ENCODE measurements at regions of chr4 and their contacts with region 1.

Region 1: DNA sequence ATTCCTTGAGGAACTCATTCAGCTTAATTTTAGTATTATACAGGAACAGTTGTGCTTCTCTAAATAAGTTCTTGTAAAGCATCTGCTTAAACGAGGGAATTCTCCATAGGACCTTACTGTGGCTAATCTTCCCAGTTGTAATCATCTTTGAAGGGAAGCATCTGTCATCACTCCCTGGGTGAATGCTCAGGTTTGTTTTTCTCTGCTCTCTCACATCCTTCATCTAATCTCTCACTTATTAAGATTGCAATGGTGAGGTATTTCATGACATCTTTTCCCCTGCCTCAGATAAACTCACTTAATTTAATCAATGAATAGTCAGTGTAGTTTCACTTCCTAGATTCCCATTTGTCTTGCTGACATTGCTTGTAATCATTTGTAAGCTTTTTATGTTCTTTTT is 121.8 kb upstream of the ADAMTS3 start:
- DNase-seq: no peak
- H3K4me3 ChIP-seq: no peak overlapping the region
- H3K27ac ChIP-seq: no peak overlapping the region
- H3K4me1 ChIP-seq: no peaks in the 10 kb centered on the region
- H3K27me3 ChIP-seq: no peaks in the 10 kb centered on the region
- CTCF ChIP-seq: no peak

Region 2: GRCh38 chr4:71255976-71256375 is 1434.8 kb before region 1 on chr4:
- CTCF ChIA-PET with region 1: no interaction called
- POLR2A ChIA-PET with region 1: interaction called, 11 read pairs
- intact Hi-C with region 1: no loop called
- DNase-seq: no peak
- H3K4me3 ChIP-seq: no peak overlapping the region
- H3K27ac ChIP-seq: no peak overlapping the region
- H3K4me1 ChIP-seq: no peaks in the 10 kb centered on the region
- H3K27me3 ChIP-seq: no peaks in the 10 kb centered on the region
- CTCF ChIP-seq: no peak

Region 3: GRCh38 chr4:72631296-72631695 is 59.5 kb before region 1 on chr4:
- CTCF ChIA-PET with region 1: no interaction called
- POLR2A ChIA-PET with region 1: no interaction called
- intact Hi-C with region 1: no loop called
- DNase-seq: peak in 1 of 2 experiments; percentile 57
- H3K4me3 ChIP-seq: no peak overlapping the region
- H3K27ac ChIP-seq: no peak overlapping the region
- H3K4me1 ChIP-seq: no peaks in the 10 kb centered on the region
- H3K27me3 ChIP-seq: no peaks in the 10 kb centered on the region
- CTCF ChIP-seq: no peak

Region 4: DNA sequence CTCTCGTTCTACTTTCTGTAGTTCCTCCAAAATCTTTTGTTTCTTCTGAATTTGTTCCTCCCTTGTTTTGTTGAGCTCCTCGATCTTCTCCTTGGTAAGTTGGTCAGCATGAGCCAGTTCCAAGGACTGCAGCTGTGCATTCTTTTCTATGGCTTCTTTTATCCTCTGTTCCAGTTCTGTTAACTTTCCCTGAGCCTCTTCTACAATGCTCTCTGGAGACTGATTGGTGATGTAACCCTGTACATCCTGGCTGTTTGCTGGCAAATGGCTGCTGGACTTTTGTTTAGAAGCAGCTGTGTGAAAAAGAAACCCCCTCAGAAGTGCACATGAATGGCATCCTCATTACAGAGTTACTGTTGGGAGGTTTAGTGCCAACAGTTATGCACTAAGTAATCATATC is 449.2 kb after region 1 on chr4:
- CTCF ChIA-PET with region 1: no interaction called
- POLR2A ChIA-PET with region 1: no interaction called
- intact Hi-C with region 1: no loop called
- DNase-seq: no peak
- H3K4me3 ChIP-seq: no peak overlapping the region
- H3K27ac ChIP-seq: no peak overlapping the region
- H3K4me1 ChIP-seq: no peaks in the 10 kb centered on the region
- H3K27me3 ChIP-seq: no peaks in the 10 kb centered on the region
- CTCF ChIP-seq: no peak

Region 5: DNA sequence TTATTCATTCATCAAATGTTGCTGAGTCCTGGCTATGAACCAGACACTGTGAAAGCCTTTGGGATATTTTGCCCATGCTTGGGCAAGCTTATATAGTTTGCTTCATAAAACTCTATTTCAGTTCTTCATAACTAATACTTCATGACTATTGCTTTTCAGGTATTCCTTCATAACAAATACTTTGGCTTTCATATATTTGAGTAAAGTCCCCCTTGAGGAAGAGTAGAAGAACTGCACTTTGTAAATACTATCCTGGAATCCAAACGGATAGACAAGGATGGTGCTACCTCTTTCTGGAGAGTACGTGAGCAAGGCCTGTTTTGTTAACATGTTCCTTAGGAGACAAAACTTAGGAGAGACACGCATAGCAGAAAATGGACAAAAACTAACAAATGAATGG is 743.5 kb after region 1 on chr4:
- CTCF ChIA-PET with region 1: no interaction called
- POLR2A ChIA-PET with region 1: no interaction called
- intact Hi-C with region 1: no loop called
- DNase-seq: no peak
- H3K4me3 ChIP-seq: no peak overlapping the region
- H3K27ac ChIP-seq: no peak overlapping the region
- H3K4me1 ChIP-seq: no peaks in the 10 kb centered on the region
- H3K27me3 ChIP-seq: no peaks in the 10 kb centered on the region
- CTCF ChIP-seq: peak; percentile 53